ENCODE measurements at regions of chr5 and their contacts with region 1.

Region 1: GRCh38 chr5:73591102-73591695 is 25.7 kb downstream of the UTP15 start:
- DNase-seq: peak; percentile 76

Region 2: DNA sequence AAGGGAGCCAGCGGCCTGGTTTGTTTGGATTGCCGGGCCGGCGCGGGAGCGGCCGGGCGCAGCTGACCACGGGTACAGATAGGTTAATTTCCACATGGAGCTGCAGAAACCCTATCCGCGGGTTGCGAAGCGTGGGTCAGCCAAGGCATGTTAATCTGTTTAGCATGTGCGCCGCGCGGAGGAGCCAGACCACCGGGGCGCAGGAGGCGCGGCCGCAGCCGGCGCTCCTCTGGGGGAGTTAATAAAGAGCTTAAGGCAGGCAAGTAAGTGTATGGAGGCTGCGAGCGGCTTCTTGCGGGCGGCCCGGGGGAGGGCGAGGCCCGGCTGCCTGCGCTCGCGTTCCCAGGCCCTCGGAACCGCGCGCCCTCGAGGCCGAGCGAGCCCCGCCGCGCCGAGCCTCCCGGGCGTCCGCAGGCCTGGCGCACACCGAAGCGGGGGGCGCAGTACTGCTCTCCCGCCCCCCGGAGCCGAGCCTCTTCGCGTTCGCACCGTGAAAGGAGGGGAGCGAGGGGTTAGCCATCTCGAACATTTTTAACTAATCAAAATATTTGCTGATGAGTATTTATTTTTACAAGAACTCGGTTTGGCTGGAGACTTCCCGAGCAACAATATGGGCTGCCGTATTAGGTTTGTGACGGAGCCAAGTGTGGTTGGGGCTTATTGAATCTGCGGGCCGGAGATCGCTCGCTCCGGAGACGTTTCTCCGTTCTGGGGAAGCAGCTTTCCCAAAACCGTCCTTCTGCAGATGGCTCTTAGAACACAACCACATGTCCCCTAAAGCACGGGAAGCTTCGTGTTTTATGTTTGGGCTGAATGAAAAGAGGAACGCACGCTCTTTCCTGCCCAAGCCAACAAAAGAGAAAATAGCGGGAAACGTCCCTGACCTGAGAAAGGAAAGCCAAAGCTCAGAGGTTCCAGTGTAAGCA is 171.5 kb before region 1 on chr5:
- in situ Hi-C with region 1: no loop called
- DNase-seq: no peak

Region 3: GRCh38 chr5:73792687-73793320 is 201.6 kb after region 1 on chr5:
- in situ Hi-C with region 1: loop called (anchors 25 kb)
- DNase-seq: peak; percentile 62

Region 4: GRCh38 chr5:74067748-74068541 is 476.7 kb after region 1 on chr5:
- in situ Hi-C with region 1: no loop called
- DNase-seq: no peak